Prostate gland (tissue), 2 donors: ENCODE measurements at regions of chr1 and their contacts with region 1.

Region 1: DNA sequence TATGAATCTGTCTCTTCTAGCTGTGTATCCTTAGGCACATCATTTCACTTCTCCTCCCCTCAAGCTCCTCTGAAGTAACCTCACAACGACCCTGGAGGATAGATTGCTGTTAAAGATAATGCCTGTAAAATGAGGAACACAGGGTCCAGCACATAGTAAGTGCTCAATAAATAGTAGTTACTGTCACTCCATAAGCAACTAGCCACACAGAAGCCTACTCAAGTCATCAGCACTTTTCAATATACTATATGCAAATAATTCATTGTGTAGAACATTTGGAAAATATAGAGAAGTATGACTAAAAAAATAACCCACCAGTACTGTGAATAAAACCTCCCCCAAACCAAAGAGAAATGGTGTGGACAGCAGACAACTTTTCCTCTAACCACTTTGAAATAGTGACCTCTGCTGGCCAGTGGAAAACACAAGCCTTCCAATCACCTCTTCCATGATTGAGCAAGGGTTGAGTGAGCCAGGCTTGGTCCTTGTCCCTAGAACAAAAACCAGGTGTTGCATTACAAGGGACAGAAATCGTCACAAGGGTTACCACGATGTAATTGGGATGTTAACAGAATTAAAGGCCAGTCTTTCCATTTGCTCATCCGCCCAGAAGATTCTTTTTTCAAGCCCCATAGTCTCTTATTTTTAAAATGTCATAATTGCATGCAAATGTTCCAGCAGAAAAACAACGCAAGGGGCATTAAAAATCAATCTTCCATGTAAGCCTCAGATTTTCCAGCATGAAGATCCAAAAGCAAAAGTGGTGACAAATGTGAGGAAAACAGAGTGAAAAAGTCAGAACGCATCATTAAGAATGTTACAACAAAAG is 15.7 kb upstream of the GLIS1 start:
- DNase-seq: peak; percentile 30
- H3K4me3 ChIP-seq: no peak overlapping the region
- H3K27ac ChIP-seq: no peak overlapping the region
- H3K4me1 ChIP-seq: no peaks in the 10 kb centered on the region
- H3K27me3 ChIP-seq: no peaks in the 10 kb centered on the region
- CTCF ChIP-seq: peak in 3 of 4 experiments; percentile 48 to 63 (median 54)
- POLR2A ChIP-seq: no peak

Region 2: GRCh38 chr1:53278201-53278725 is 476.4 kb before region 1 on chr1:
- intact Hi-C with region 1: no loop called
- DNase-seq: peak; percentile 25
- H3K4me3 ChIP-seq: no peak overlapping the region
- H3K27ac ChIP-seq: no peak overlapping the region
- H3K4me1 ChIP-seq: no peaks in the 10 kb centered on the region
- H3K27me3 ChIP-seq: no peaks in the 10 kb centered on the region
- CTCF ChIP-seq: peak; percentile 70 to 91 (median 89)
- POLR2A ChIP-seq: no peak

Region 3: DNA sequence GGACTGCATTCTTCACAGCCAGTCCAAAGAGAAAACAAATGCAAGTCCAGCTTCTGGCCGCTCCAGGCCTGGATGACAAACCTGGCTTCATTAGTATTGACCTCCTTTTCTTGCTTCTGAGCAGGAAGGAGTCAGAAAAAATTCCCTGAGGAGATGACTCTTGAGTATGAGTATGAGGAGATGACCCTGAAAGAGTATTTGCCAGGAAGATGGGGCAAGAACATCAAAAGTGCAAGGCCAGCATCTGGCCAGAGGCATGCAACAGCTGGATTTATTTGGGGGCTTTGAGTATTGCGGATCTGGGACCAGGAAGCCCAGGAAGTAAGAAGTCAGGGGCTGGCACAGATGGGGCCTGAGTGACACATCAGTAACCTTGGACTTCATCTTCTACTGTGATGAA is 129.6 kb before region 1 on chr1:
- intact Hi-C with region 1: loop called (anchors 5 kb)
- DNase-seq: no peak
- H3K4me3 ChIP-seq: no peak overlapping the region
- H3K27ac ChIP-seq: no peak overlapping the region
- H3K4me1 ChIP-seq: no peaks in the 10 kb centered on the region
- H3K27me3 ChIP-seq: no peaks in the 10 kb centered on the region
- CTCF ChIP-seq: no peak
- POLR2A ChIP-seq: no peak

Region 4: DNA sequence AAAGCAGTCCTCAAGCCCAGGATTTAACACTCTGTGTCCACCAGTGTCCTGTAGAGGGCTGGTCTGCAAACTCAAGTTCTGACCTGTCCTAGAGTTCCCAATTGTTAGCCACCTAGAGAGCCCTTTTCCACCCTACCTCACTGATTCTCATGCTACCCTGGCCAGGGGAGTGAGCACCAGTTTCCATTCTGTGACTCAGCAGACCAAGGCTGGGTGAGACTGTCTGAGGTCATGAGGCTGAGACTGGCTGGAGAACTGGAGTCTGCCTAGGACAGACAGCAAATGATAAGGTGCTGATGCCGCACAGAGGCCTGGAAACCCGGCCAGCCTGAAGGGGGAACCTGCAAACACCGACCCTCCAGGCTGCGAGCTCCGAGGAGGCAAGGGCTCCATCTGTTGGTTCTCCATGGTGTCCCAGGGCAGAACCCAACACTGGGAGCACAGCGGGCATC is 29.4 kb before region 1 on chr1:
- intact Hi-C with region 1: no loop called
- DNase-seq: no peak
- H3K4me3 ChIP-seq: no peak overlapping the region
- H3K27ac ChIP-seq: no peak overlapping the region
- H3K4me1 ChIP-seq: no peaks in the 10 kb centered on the region
- H3K27me3 ChIP-seq: no peaks in the 10 kb centered on the region
- CTCF ChIP-seq: no peak
- POLR2A ChIP-seq: no peak

Region 5: GRCh38 chr1:54355931-54356679 is 601.4 kb after region 1 on chr1:
- intact Hi-C with region 1: no loop called
- DNase-seq: no peak
- H3K4me3 ChIP-seq: no peak overlapping the region
- H3K27ac ChIP-seq: no peak overlapping the region
- H3K4me1 ChIP-seq: peaks cover 19% of the 10 kb centered on the region
- H3K27me3 ChIP-seq: no peaks in the 10 kb centered on the region
- CTCF ChIP-seq: no peak
- POLR2A ChIP-seq: no peak